ENCODE measurements at regions of chr6 and their contacts with region 1.

Region 1: GRCh38 chr6:32785781-32786533 is 22.6 kb upstream of the HLA-DQB2 start:
- DNase-seq: peak; percentile 27
- ATAC-seq: peak; percentile 94
- H3K4me3 ChIP-seq: no peak overlapping the region
- H3K27ac ChIP-seq: no peak overlapping the region
- H3K4me1 ChIP-seq: no peaks in the 10 kb centered on the region
- H3K27me3 ChIP-seq: no peaks in the 10 kb centered on the region; a peak in 1 of 4 replicates
- CTCF ChIP-seq: peak; percentile 64 to 78 (median 69)
- EP300 ChIP-seq: no peak
- POLR2A ChIP-seq: no peak
- RAD21 ChIP-seq: peak; percentile 80

Region 2: DNA sequence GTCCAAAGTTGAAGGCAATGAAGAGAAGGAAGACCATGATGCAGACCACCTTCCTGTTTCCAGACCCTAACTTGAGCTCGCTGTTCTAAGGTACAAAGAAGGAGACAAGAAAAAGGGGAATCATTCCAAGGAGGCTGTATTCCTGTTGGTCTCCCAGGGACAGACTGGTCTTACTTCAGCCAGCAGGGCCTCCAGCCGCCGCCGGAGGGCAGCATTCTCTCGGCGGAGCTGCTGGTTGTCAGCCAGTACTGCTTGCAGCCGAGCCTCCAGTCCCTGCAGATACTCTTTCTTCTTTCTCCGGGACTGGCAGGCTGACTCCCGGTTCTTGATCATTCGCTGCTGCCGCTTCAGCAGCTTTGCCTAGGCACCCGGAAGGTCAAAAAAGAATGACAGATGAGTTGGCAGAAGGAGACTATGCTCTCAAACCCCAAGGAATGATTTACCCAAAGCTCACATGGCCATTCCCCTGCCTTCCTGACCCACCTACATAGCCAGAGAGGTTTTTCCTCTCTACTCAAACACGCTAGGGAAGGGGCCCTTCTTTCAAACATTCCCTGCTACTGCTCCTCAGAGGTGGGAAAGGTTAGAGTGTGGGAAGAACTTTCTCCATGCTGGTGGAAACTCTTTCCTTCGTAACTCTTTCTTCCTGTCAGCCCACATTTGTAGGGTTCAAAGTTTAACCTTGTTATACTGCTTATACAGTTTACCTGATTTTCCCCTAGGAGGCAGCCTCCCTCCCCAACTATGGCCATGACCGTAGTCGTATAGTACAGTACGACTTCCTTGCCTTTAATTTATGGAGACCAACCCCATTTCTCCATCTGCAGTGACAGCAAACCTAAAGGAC is 667.0 kb before region 1 on chr6:
- CTCF ChIA-PET with region 1: interaction called, 5 read pairs
- POLR2A ChIA-PET with region 1: no interaction called
- RAD21 ChIA-PET with region 1: no interaction called
- SMC1A ChIA-PET with region 1: interaction called, 3 read pairs
- in situ Hi-C with region 1: no loop called
- intact Hi-C with region 1: loop called (anchors 10 kb)
- DNase-seq: peak; percentile 24
- ATAC-seq: peak; percentile 99
- H3K4me3 ChIP-seq: no peak overlapping the region
- H3K27ac ChIP-seq: no peak overlapping the region
- H3K4me1 ChIP-seq: no peaks in the 10 kb centered on the region
- H3K27me3 ChIP-seq: no peaks in the 10 kb centered on the region
- CTCF ChIP-seq: peak; percentile 93 to 96 (median 95)
- EP300 ChIP-seq: no peak
- POLR2A ChIP-seq: no peak; the same call in 1 of the 2 replicates
- RAD21 ChIP-seq: peak; percentile 73

Region 3: DNA sequence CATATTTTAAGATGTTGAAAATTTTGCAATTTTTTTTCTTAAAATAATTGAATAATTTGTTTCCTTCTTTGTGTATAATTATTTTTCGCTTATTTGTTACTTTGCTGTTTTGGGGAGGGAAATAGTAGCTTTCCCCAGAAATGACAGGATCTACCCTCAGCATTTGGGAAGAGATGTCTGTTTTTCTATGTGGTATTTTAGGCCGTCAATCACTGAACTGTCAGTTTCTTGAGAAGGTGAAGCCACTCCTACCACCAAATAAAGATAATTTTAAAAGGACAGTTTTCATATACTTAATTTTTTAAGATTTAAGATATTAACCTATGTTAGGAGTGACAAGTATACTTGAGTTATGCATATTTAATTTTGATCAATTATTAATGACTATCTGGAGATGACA is 445.7 kb before region 1 on chr6:
- CTCF ChIA-PET with region 1: no interaction called
- POLR2A ChIA-PET with region 1: no interaction called
- RAD21 ChIA-PET with region 1: no interaction called
- SMC1A ChIA-PET with region 1: no interaction called
- in situ Hi-C with region 1: no loop called
- intact Hi-C with region 1: no loop called
- DNase-seq: no peak
- ATAC-seq: no peak
- H3K4me3 ChIP-seq: no peak overlapping the region
- H3K27ac ChIP-seq: no peak overlapping the region
- H3K4me1 ChIP-seq: no peaks in the 10 kb centered on the region
- H3K27me3 ChIP-seq: peaks cover 0 to 6% of the 10 kb centered on the region in 2 experiments; a peak in 2 of 4 replicates
- CTCF ChIP-seq: no peak
- EP300 ChIP-seq: no peak
- POLR2A ChIP-seq: no peak
- RAD21 ChIP-seq: no peak

Region 4: GRCh38 chr6:32355018-32355417 is 430.9 kb before region 1 on chr6:
- CTCF ChIA-PET with region 1: no interaction called
- POLR2A ChIA-PET with region 1: no interaction called
- RAD21 ChIA-PET with region 1: no interaction called
- SMC1A ChIA-PET with region 1: no interaction called
- in situ Hi-C with region 1: no loop called
- intact Hi-C with region 1: no loop called
- DNase-seq: no peak
- ATAC-seq: no peak
- H3K4me3 ChIP-seq: no peak overlapping the region
- H3K27ac ChIP-seq: no peak overlapping the region
- H3K4me1 ChIP-seq: no peaks in the 10 kb centered on the region
- H3K27me3 ChIP-seq: peaks cover 0 to 3% of the 10 kb centered on the region in 2 experiments; a peak in 1 of 4 replicates
- CTCF ChIP-seq: no peak
- EP300 ChIP-seq: no peak
- POLR2A ChIP-seq: no peak
- RAD21 ChIP-seq: no peak

Region 5: GRCh38 chr6:32413427-32414047 is 372.4 kb before region 1 on chr6:
- CTCF ChIA-PET with region 1: interaction called, 200 read pairs
- POLR2A ChIA-PET with region 1: no interaction called
- RAD21 ChIA-PET with region 1: interaction called, 60 read pairs
- SMC1A ChIA-PET with region 1: interaction called, 99 read pairs
- in situ Hi-C with region 1: loop called (anchors 5 kb)
- intact Hi-C with region 1: loop called (anchors 2 kb)
- DNase-seq: peak; percentile 40
- ATAC-seq: peak; percentile 94
- H3K4me3 ChIP-seq: no peak overlapping the region
- H3K27ac ChIP-seq: no peak overlapping the region
- H3K4me1 ChIP-seq: no peaks in the 10 kb centered on the region
- H3K27me3 ChIP-seq: no peaks in the 10 kb centered on the region; a peak in 2 of 4 replicates
- CTCF ChIP-seq: peak; percentile 84 to 96 (median 94)
- EP300 ChIP-seq: no peak
- POLR2A ChIP-seq: no peak
- RAD21 ChIP-seq: peak; percentile 83

Region 6: DNA sequence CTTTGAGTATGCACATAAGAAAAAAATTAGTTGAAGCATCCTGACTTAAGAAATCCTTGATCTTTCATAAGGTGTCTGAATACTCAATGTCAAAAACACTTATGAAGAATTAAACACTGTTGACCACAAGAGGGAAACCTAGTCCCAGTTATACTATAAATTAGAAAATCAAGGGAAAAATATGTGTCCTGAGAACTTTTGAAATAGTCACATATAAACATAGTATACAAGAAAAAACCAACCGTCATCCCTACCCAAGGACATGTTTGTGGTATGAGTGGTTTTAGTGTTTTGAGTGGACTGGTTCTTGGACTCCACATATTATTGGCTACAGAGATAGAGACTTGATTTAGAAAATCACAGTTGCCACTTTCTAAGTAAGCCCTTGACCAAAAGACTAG is 353.9 kb before region 1 on chr6:
- CTCF ChIA-PET with region 1: interaction called, 66 read pairs
- POLR2A ChIA-PET with region 1: no interaction called
- RAD21 ChIA-PET with region 1: interaction called, 32 read pairs
- SMC1A ChIA-PET with region 1: interaction called, 63 read pairs
- in situ Hi-C with region 1: no loop called
- intact Hi-C with region 1: loop called (anchors 5 kb)
- DNase-seq: no peak
- ATAC-seq: peak; percentile 55
- H3K4me3 ChIP-seq: no peak overlapping the region
- H3K27ac ChIP-seq: no peak overlapping the region
- H3K4me1 ChIP-seq: peaks cover 10% of the 10 kb centered on the region
- H3K27me3 ChIP-seq: no peaks in the 10 kb centered on the region
- CTCF ChIP-seq: peak in 2 of 3 experiments; percentile 41 to 62; a peak in 4 of 6 replicates
- EP300 ChIP-seq: no peak
- POLR2A ChIP-seq: no peak
- RAD21 ChIP-seq: peak; percentile 76

Region 7: GRCh38 chr6:32604434-32604877 is 181.5 kb before region 1 on chr6:
- CTCF ChIA-PET with region 1: no interaction called
- POLR2A ChIA-PET with region 1: no interaction called
- RAD21 ChIA-PET with region 1: no interaction called
- SMC1A ChIA-PET with region 1: no interaction called
- in situ Hi-C with region 1: no loop called
- intact Hi-C with region 1: no loop called
- DNase-seq: peak; percentile 82
- ATAC-seq: peak; percentile 73
- H3K4me3 ChIP-seq: no peak overlapping the region
- H3K27ac ChIP-seq: peak overlapping the region; percentile 95
- H3K4me1 ChIP-seq: peaks cover 9% of the 10 kb centered on the region
- H3K27me3 ChIP-seq: no peaks in the 10 kb centered on the region
- CTCF ChIP-seq: no peak
- EP300 ChIP-seq: peak in 1 of 2 experiments; percentile 62; a peak in 2 of 4 replicates
- POLR2A ChIP-seq: no peak
- RAD21 ChIP-seq: no peak

Region 8: GRCh38 chr6:32692019-32692418 is 93.9 kb before region 1 on chr6:
- CTCF ChIA-PET with region 1: interaction called, 8 read pairs
- POLR2A ChIA-PET with region 1: no interaction called
- RAD21 ChIA-PET with region 1: interaction called, 15 read pairs
- SMC1A ChIA-PET with region 1: interaction called, 7 read pairs
- in situ Hi-C with region 1: no loop called
- intact Hi-C with region 1: no loop called
- DNase-seq: peak; percentile 50
- ATAC-seq: peak; percentile 77
- H3K4me3 ChIP-seq: no peak overlapping the region
- H3K27ac ChIP-seq: no peak overlapping the region
- H3K4me1 ChIP-seq: peaks cover 21% of the 10 kb centered on the region
- H3K27me3 ChIP-seq: no peaks in the 10 kb centered on the region; a peak in 1 of 4 replicates
- CTCF ChIP-seq: peak; percentile 68 to 84 (median 80)
- EP300 ChIP-seq: no peak
- POLR2A ChIP-seq: no peak
- RAD21 ChIP-seq: peak; percentile 97

Region 9: GRCh38 chr6:32713241-32713640 is 72.7 kb before region 1 on chr6:
- CTCF ChIA-PET with region 1: interaction called, 21 read pairs
- POLR2A ChIA-PET with region 1: no interaction called
- RAD21 ChIA-PET with region 1: interaction called, 5 read pairs
- SMC1A ChIA-PET with region 1: interaction called, 5 read pairs
- in situ Hi-C with region 1: no loop called
- intact Hi-C with region 1: no loop called
- DNase-seq: no peak
- ATAC-seq: no peak
- H3K4me3 ChIP-seq: no peak overlapping the region
- H3K27ac ChIP-seq: no peak overlapping the region
- H3K4me1 ChIP-seq: no peaks in the 10 kb centered on the region
- H3K27me3 ChIP-seq: no peaks in the 10 kb centered on the region
- CTCF ChIP-seq: no peak
- EP300 ChIP-seq: no peak
- POLR2A ChIP-seq: no peak
- RAD21 ChIP-seq: no peak

Region 10: DNA sequence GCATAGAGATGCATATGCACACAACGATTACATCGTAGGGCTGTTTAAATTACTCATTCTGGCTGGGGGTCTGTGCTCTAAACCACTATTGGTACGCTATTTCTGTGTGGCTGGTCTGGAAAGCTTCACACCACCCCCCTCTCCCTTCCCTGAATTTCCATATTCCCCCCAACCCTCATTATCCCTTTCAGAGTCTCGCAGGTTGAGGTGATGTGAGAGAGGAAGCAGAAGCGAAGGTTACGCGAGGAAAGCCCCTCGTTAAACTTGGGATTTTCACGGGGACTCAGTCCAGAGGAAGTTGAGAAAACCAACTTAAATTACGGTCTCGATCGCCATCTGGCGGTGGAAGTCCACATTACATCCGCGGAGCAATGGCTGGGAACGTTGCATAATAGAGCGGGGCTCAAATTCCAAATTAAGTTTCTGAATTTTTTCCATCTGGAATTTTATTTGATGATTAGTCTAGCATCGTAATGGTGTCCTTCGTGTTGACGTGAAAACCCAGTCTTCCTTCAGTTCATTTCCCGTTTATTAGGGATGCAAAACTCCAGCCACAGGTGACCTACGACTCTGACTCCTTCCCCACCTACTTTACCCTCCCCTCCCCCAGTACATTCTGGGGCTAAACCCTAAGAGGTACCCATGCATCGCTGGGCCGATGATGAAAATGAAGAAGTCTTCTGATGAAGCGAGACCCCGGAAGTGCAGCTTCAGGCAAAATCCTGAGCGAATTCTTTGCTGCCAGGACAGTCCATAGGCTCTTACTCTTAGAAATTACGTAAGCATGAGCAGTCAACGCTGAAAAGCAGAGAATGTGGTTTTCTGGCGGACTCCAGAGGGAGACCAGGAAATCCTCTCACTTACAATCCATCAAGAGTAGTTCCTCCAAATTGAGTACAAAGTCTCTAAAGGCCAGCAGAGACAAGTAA is 11.2 kb after region 1 on chr6:
- CTCF ChIA-PET with region 1: interaction called, 36 read pairs
- POLR2A ChIA-PET with region 1: no interaction called
- RAD21 ChIA-PET with region 1: interaction called, 17 read pairs
- SMC1A ChIA-PET with region 1: interaction called, 36 read pairs
- in situ Hi-C with region 1: no loop called
- intact Hi-C with region 1: no loop called
- DNase-seq: no peak
- ATAC-seq: peak; percentile 89
- H3K4me3 ChIP-seq: peak overlapping the region; percentile 29; the same call in 1 of the 2 replicates
- H3K27ac ChIP-seq: peak overlapping the region; percentile 32
- H3K4me1 ChIP-seq: peaks cover 19% of the 10 kb centered on the region
- H3K27me3 ChIP-seq: peaks cover 0 to 5% of the 10 kb centered on the region in 2 experiments; a peak in 2 of 4 replicates
- CTCF ChIP-seq: peak; percentile 69 to 89 (median 86)
- EP300 ChIP-seq: no peak
- POLR2A ChIP-seq: no peak
- RAD21 ChIP-seq: peak; percentile 74

Region 11: DNA sequence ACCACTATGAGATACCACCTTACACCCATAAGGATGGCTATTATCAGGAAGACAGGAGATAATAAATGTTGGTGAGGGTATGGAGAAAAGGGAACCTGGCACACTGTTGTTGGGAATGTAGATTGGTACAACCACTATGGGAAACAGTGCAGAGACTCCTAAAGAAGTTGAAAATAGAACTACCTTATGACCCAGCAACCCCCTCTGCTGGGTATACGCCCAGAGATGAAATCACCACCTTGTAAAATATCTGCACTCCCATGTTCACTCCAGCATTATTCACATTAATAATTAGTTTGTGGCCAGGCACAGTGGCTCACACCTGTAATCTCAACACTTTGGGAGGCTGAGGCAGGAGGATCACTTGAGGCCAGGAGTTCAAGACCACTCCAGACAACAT is 695.2 kb after region 1 on chr6:
- CTCF ChIA-PET with region 1: no interaction called
- POLR2A ChIA-PET with region 1: no interaction called
- RAD21 ChIA-PET with region 1: no interaction called
- SMC1A ChIA-PET with region 1: no interaction called
- in situ Hi-C with region 1: no loop called
- intact Hi-C with region 1: no loop called
- DNase-seq: no peak
- ATAC-seq: no peak
- H3K4me3 ChIP-seq: no peak overlapping the region
- H3K27ac ChIP-seq: no peak overlapping the region
- H3K4me1 ChIP-seq: no peaks in the 10 kb centered on the region
- H3K27me3 ChIP-seq: no peaks in the 10 kb centered on the region; a peak in 1 of 4 replicates
- CTCF ChIP-seq: peak in 1 of 3 experiments; percentile 10; a peak in 1 of 6 replicates
- EP300 ChIP-seq: no peak
- POLR2A ChIP-seq: no peak
- RAD21 ChIP-seq: no peak

Measured in GM12878 (cell line).